Activated CD4-positive, alpha-beta T cell treated with anti-CD3 and anti-CD28 coated beads for 36 hours (primary cell): ENCODE measurements at regions of chr4 and their contacts with region 1.

Region 1: DNA sequence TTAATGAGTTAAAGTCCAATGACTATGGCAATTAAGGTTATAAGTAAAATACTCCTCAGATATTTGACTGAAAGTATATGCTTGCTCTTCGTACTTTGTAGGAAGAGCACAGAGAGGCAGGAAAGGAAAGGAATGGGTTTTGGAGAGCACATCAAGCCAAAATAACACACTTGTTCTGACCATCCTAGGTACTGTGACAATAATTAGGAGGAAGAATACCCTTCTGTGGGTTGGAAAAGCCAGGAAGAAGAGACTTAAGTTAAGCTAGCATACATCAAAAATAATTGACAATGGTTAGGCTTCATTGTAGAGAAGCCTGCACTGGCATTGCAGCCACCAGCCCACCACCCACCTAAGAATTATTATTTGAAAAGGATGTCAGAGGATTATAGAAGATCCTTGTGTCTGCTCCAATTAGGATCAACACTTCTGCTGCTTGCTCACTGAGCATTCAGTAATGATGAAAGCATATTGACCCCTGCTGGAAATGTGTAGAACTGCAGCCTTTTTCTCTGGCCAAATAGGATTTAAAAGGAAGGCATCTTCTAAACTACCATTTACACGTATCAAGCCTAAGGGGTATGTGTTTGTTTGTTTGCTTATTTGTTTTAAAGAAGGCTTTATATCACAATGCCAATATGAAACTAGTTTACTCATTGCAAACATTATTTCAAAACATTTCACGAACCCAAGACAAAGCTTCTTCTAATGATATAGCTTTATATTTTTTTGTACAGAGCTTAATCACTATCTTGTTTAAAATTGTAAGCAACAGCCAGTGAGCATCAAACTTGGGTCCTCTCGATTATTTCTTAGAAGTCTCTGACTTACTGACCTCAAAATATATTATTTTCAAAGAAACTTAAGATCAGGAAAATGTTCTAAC is 286.2 kb upstream of the TET2 start:
- DNase-seq: peak; percentile 62
- ATAC-seq: peak; percentile 44
- H3K4me3 Mint-ChIP-seq: no peak overlapping the region
- H3K27ac Mint-ChIP-seq: no peak overlapping the region
- H3K4me1 Mint-ChIP-seq: no peaks in the 10 kb centered on the region
- H3K27me3 Mint-ChIP-seq: no peaks in the 10 kb centered on the region

Region 2: GRCh38 chr4:104064646-104065577 is 795.6 kb before region 1 on chr4:
- CTCF ChIA-PET with region 1: no interaction called
- POLR2A ChIA-PET with region 1: no interaction called
- intact Hi-C with region 1: loop called in 1 of 2 experiments (anchors 5 kb)
- DNase-seq: peak; percentile 35
- ATAC-seq: no peak
- H3K4me3 Mint-ChIP-seq: no peak overlapping the region
- H3K27ac Mint-ChIP-seq: no peak overlapping the region
- H3K4me1 Mint-ChIP-seq: no peaks in the 10 kb centered on the region
- H3K27me3 Mint-ChIP-seq: no peaks in the 10 kb centered on the region

Region 3: GRCh38 chr4:104693599-104694201 is 166.8 kb before region 1 on chr4:
- CTCF ChIA-PET with region 1: no interaction called
- POLR2A ChIA-PET with region 1: no interaction called
- intact Hi-C with region 1: loop called in 1 of 2 experiments (anchors 2 kb)
- DNase-seq: no peak
- ATAC-seq: no peak
- H3K4me3 Mint-ChIP-seq: no peak overlapping the region
- H3K27ac Mint-ChIP-seq: no peak overlapping the region
- H3K4me1 Mint-ChIP-seq: no peaks in the 10 kb centered on the region
- H3K27me3 Mint-ChIP-seq: no peaks in the 10 kb centered on the region

Region 4: DNA sequence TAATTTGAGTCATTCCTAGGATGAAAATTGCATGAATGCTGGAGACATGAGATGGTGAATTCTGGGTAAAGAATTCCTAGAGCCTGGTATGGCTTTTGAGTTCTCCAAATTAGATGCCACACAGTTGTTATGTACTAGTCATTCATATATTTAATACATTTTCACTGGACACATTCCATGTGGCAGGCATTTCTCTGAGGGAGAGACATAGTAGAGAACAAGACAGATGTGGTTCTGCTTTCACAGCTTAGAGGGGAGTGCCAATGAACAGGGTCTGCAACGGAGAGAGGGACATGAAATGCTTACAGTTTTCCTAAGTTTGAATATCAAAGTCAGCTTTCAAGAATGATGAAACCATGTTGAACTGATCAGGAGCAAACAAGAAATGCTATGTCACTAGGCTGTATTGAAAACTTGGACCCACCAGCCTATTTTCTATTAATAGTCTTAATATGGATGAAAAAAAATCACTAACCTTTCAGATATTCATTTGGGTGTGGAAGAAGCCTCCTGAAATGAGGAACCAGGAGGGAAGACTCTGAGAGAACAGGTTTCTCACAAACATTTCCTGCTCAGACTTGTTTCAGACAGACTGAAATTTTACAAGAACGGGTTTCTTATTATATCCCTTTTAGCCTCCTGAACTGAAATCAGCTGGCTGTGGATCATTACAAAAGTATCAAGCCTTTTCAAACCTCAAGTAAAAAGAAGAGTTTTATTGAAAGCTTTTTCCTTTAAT is 10.2 kb after region 1 on chr4:
- CTCF ChIA-PET with region 1: interaction called, 10 read pairs
- POLR2A ChIA-PET with region 1: no interaction called
- intact Hi-C with region 1: no loop called
- DNase-seq: no peak
- ATAC-seq: no peak
- H3K4me3 Mint-ChIP-seq: no peak overlapping the region
- H3K27ac Mint-ChIP-seq: no peak overlapping the region
- H3K4me1 Mint-ChIP-seq: no peaks in the 10 kb centered on the region
- H3K27me3 Mint-ChIP-seq: peaks cover 10% of the 10 kb centered on the region

Region 5: DNA sequence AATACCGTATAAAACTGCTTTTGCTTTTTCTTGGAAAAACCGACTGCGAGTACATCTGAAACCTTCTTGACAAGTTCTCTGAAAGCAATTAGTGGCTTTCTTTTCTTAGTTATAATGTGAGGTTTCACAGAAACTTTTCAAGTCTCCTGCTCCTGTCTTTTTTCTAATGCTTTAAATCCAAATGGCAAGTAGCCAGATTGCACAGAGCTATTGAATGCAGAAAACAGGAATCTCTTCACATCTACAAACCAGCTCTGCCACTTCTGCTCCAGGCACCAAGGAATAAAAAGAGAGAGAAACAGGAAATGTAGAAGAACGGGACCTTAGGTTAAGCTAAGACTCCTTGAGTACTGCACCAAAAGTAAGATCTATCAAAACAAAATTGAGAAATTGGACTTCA is 18.9 kb after region 1 on chr4:
- CTCF ChIA-PET with region 1: interaction called, 14 read pairs
- POLR2A ChIA-PET with region 1: no interaction called
- intact Hi-C with region 1: no loop called
- DNase-seq: no peak
- ATAC-seq: no peak
- H3K4me3 Mint-ChIP-seq: no peak overlapping the region
- H3K27ac Mint-ChIP-seq: no peak overlapping the region
- H3K4me1 Mint-ChIP-seq: no peaks in the 10 kb centered on the region
- H3K27me3 Mint-ChIP-seq: peaks cover 5% of the 10 kb centered on the region